Activated CD8-positive, alpha-beta memory T cell treated with anti-CD3 and anti-CD28 coated beads, Interleukin-2, amount 10 ng/mL, durations not matched to agents 7 days and 5 days (primary cell): ENCODE measurements at regions of chr5 and their contacts with region 1.

Region 1: DNA sequence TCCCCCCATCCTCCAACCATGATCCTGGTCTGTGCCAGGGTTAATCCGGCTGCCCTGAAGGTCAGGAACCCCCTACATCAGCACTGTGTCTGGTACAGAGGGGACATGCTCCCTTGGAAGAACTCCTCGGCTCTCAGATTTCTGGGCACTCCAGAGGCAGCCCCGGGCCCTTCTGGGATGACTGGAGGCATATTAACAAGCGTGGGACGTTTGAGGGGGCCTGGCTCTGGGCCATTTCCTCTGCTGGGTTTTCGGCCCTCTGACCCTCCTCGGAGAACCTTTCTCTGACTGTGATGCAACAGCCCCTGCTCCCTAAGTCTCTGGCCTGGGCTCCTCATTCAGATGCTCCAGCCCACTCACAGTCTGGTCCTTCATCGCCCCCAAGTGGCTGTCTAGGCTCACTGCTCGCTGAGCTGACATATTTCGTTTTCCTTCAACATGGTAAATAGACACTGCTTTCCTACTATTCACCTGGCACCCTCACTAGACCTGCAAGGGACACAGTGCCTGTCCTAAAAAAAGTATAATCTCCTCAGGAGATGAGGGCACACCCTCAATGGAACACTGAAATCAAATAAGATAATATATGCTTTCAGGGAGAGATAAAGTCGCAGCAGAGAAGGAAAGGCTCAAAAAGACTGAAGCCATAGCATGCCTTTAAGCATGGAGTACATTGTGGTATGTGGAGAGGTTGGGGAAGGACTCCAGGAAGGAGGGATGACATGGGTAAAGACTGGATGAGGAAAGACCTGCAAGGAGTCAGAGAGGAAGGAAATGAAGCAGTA is 404.7 kb upstream of the TRPC7 start:
- DNase-seq: peak; percentile 54
- ATAC-seq: peak; percentile 51
- H3K4me3 Mint-ChIP-seq: no peak overlapping the region
- H3K27ac Mint-ChIP-seq: no peak overlapping the region
- H3K4me1 Mint-ChIP-seq: peaks cover 6% of the 10 kb centered on the region
- H3K27me3 Mint-ChIP-seq: no peaks in the 10 kb centered on the region

Region 2: GRCh38 chr5:136249678-136250266 is 520.3 kb before region 1 on chr5:
- CTCF ChIA-PET with region 1: interaction called, 11 read pairs
- DNase-seq: no peak
- ATAC-seq: no peak
- H3K4me3 Mint-ChIP-seq: no peak overlapping the region
- H3K27ac Mint-ChIP-seq: no peak overlapping the region
- H3K4me1 Mint-ChIP-seq: no peaks in the 10 kb centered on the region
- H3K27me3 Mint-ChIP-seq: peaks cover 4% of the 10 kb centered on the region